Left ventricle myocardium superior (tissue), 1 donor: ENCODE measurements at regions of chr17 and their contacts with region 1.

Region 1: GRCh38 chr17:50626037-50626574 is 8.6 kb upstream of the ABCC3 start:
- DNase-seq: peak; percentile 85
- ATAC-seq: peak; percentile 84

Region 2: GRCh38 chr17:50482516-50482915 is 143.6 kb before region 1 on chr17:
- intact Hi-C with region 1: loop called (anchors 10 kb)
- DNase-seq: peak; percentile 95
- ATAC-seq: peak; percentile 64

Region 3: DNA sequence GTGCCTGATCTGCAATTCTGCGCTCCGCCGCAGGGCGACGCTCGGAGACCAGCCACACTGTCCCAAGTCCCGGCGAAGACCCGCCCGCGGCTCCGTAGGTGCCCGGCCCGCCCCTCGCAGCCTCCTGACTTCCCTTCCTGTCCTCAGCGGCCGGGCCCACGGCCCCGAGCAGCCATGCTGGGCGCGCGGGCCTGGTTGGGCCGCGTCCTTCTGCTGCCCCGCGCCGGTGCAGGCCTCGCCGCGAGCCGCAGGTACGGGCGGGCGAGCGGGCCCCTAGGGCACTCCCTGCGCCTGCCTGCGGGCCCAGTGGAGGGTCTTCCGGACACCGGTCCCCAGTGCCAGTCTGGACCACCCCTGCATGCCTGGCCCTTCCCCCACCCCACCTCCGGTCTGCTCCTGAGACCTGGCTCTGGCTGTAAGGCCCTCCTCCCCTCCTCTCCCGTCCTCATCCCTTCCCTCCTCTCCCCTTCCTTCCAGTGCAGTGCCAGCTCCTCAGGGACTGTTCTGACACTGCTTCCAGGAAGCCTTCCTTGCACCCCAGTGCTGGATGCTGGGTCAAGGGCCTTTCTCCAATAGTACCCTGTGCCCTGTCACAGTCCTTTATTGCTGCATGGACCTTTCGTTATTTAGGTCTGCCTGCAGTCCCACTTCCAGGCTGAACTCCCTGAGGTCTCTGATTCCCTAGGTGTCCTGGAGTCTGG is 78.9 kb before region 1 on chr17 and contains the start of gene SPATA20:
- intact Hi-C with region 1: loop called (anchors 5 kb)
- DNase-seq: peak; percentile 97
- ATAC-seq: peak; percentile 84
- total RNA-seq, gene SPATA20: 68.7 TPM

Region 4: DNA sequence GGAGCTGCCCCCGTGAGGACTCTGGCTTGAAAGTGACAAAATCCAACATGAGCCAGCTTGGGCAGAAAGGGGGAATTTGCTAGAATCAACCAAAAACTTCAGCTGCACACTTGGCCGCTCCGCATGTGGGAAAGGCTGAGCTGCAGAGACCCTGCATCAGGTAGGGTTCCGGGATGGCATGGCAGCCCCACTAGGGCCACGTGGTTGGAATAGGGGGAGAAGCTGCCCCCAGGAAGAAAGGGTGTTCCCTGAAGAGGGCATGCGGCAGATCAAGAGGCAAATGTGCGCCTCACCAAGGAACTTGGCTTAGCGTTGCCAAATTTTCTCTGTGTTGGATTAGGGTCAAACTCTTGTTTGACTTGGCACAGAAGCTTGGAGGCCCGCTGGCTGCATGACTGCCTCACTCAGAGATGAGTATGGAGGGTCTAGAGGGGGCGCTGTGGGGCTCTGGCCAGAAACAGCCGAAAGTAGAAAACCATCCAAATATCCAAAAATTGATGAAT is 180.1 kb after region 1 on chr17:
- intact Hi-C with region 1: no loop called
- DNase-seq: no peak
- ATAC-seq: peak; percentile 64